HepG2 (cell line): ENCODE measurements at regions of chr4 and their contacts with region 1.

Region 1: DNA sequence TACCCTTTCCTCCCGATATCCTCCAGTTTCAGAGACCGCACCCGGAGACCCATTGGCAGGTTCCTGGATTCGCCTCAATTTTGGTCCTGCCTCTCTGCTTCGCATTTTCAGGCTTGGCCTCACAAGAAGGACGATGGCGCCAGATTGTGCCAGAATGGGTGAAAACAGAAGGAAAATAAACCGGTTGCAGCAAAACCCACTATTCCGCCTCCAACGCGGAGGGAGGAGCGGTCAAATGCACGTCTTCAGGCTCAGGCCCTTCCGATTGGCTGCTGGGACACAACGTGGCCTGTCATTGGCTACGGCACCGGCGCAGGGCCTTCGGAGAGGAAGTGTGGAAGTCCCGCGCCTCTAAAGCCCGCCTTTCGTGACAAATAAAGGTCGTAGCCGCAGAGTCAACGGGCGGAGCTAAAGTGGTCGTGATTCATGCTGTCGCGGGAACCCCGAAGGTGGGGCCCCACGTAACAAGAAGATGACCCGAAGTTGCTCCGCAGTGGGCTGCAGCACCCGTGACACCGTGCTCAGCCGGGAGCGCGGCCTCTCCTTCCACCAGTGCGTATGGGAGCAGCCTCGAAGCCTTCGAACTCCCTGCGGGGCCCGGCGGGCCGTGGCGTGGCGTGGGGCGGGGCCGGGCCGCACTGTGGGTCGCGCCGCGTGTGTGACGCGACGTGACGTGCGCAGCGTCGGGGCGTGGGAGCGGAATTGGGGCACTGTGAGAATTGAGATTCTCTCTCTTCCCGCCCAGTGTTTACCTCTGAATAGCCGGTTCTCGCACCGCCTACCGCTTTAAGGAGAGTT is at the start of gene THAP9:
- DNase-seq: peak; percentile 98
- ATAC-seq: peak; percentile 98
- H3K4me3 ChIP-seq: peak within 1 kb of the TSS; percentile 77 to 88 (median 82)
- H3K27ac ChIP-seq: peak within 1 kb of the TSS; percentile 91
- H3K4me1 ChIP-seq: peaks cover 39% of the 10 kb centered on the region
- H3K27me3 ChIP-seq: no peaks in the 10 kb centered on the region; a peak in 1 of 5 replicates
- CTCF ChIP-seq: peak; percentile 12; the same call in 1 of the 2 replicates
- EP300 ChIP-seq: no peak
- POLR2A ChIP-seq: peak; percentile 73 to 92
- RAD21 ChIP-seq: 0 out of 2 replicates have a peak, but pooled peaks have one; percentile 17
- total RNA-seq, gene THAP9: 7.2 and 11.4 TPM in 2 replicates

Region 2: DNA sequence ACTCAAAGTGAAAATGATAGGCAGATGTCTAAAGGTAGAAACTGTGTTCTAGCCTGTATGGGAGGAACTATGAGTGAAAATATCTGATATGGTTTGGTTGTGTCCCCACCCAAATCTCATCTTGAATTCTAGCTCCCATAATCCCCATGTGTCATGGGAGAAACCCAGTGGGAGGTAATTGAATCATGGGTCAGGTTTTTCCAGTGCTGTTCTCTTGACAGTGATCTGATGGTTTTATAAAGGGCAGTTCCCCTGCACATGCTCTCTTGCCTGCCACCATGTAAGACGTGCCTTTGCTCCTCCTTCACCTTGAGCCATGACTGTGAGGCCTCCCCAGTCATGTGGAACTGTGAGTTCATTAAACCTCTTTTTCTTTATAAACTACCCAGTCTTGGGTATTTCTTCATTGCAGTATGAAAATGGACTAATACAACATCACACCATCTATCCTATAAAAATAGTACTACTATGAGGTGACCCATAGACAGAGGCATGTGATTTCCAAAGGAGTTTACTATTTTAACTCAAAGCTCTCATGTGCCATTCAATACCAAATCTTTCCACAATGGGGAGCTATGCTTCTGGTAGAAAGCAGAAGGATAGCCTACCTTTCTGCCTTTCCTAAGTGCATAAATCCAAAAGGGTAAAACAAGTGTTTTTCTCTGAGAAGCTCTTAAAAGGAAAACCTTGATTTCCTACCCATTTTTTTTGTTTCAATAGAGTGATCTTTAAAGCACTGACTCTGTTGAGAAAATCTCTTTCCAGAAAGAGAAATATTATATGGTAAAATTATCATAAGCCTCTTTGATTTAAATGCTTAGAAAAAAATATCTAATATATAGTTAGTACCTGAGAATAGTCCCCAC is 48.4 kb before region 1 on chr4:
- CTCF ChIA-PET with region 1: no interaction called
- POLR2A ChIA-PET with region 1: interaction called, 3 read pairs
- in situ Hi-C with region 1: no loop called
- intact Hi-C with region 1: loop called (anchors 2 kb)
- DNase-seq: peak; percentile 45
- ATAC-seq: peak; percentile 62
- H3K4me3 ChIP-seq: no peak overlapping the region
- H3K27ac ChIP-seq: no peak overlapping the region
- H3K4me1 ChIP-seq: no peaks in the 10 kb centered on the region
- H3K27me3 ChIP-seq: no peaks in the 10 kb centered on the region
- CTCF ChIP-seq: peak; percentile 36
- EP300 ChIP-seq: no peak
- POLR2A ChIP-seq: no peak
- RAD21 ChIP-seq: no peak

Region 3: GRCh38 chr4:82885410-82885809 is 15.1 kb before region 1 on chr4:
- CTCF ChIA-PET with region 1: no interaction called
- POLR2A ChIA-PET with region 1: interaction called, 76 read pairs
- in situ Hi-C with region 1: no loop called
- intact Hi-C with region 1: loop called (anchors 2 kb)
- DNase-seq: peak; percentile 54
- ATAC-seq: peak; percentile 35
- H3K4me3 ChIP-seq: peak overlapping the region in 2 of 3 experiments; percentile 74 to 91; a peak in 2 of 6 replicates
- H3K27ac ChIP-seq: peak overlapping the region; percentile 75
- H3K4me1 ChIP-seq: peaks cover 51% of the 10 kb centered on the region
- H3K27me3 ChIP-seq: no peaks in the 10 kb centered on the region; a peak in 2 of 5 replicates
- CTCF ChIP-seq: no peak
- EP300 ChIP-seq: peak in 1 of 2 experiments; percentile 49; a peak in 2 of 4 replicates
- POLR2A ChIP-seq: no peak
- RAD21 ChIP-seq: no peak

Region 4: GRCh38 chr4:83034630-83035494 is 134.3 kb after region 1 on chr4 and contains the start of gene COPS4:
- CTCF ChIA-PET with region 1: no interaction called
- POLR2A ChIA-PET with region 1: interaction called, 15 read pairs
- in situ Hi-C with region 1: no loop called
- intact Hi-C with region 1: no loop called
- DNase-seq: peak; percentile 100
- ATAC-seq: peak; percentile 99
- H3K4me3 ChIP-seq: peak within 1 kb of the TSS; percentile 88 to 95 (median 92)
- H3K27ac ChIP-seq: peak within 1 kb of the TSS; percentile 98
- H3K4me1 ChIP-seq: peaks cover 43% of the 10 kb centered on the region
- H3K27me3 ChIP-seq: no peaks in the 10 kb centered on the region; a peak in 2 of 5 replicates
- CTCF ChIP-seq: no peak; the same call in 1 of the 2 replicates
- EP300 ChIP-seq: peak in 1 of 2 experiments; percentile 53; a peak in 1 of 4 replicates
- POLR2A ChIP-seq: peak; percentile 60 to 93; a peak in 3 of 4 replicates
- RAD21 ChIP-seq: peak; percentile 47; the same call in 1 of the 2 replicates
- total RNA-seq, gene COPS4: 52.5 and 90.4 TPM in 2 replicates